AG04450 (cell line): ENCODE measurements at regions of chr2 and their contacts with region 1.

Region 1: GRCh38 chr2:127649684-127650040 is 3.7 kb downstream of the GPR17 start:
- DNase-seq: peak; percentile 61
- H3K4me3 ChIP-seq: no peak overlapping the region
- H3K27ac ChIP-seq: no peak overlapping the region
- H3K27me3 ChIP-seq: no peaks in the 10 kb centered on the region
- CTCF ChIP-seq: peak; percentile 91

Region 2: DNA sequence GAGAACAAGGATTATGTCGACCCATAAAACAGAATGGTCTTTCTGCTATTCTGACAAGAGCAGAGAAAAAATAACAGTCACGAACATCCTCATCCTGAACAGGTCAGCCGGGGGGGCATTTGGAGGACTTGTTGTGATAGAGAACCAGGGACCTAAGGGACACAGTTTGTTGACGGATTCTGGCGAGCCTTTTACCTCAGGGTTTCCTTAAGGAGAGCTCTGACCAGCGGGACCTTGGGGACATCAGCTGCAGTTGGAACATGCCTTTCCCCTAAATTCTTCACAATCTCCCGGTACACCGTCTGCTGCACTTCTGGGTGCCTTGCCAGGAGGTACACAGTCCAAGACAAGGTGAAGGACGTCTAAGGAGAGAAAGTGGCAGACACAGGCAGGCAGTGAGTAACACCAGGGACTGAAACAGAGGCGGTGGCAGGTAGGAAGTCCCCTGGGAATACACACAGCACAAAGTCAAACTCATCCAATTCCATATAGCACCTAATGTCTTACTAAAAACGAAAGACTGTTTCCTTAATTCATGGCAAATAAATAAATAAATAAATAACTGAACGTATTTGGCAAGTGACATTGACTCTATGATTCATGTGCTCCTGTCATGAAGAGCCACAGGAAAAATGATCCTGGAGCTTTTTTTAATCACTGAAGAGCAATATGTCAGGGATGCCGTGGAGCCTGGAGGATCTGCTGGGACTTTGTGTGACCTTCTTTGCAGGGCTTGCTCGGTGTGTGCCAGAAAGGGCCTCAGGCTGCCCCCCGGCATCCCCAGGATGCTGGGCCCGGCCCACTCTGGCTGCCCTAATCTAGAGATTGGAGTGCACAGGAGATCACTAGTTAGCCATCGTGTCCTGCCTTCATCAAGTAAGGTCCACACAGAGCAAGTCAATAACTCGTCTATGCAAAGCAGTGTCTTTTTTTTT is 454.3 kb before region 1 on chr2:
- CTCF ChIA-PET with region 1: interaction called, 11 read pairs
- POLR2A ChIA-PET with region 1: no interaction called
- DNase-seq: no peak
- H3K4me3 ChIP-seq: no peak overlapping the region
- H3K27ac ChIP-seq: no peak overlapping the region
- H3K27me3 ChIP-seq: peaks cover 4% of the 10 kb centered on the region
- CTCF ChIP-seq: no peak

Region 3: GRCh38 chr2:127591221-127591923 is 58.3 kb before region 1 on chr2:
- CTCF ChIA-PET with region 1: interaction called, 22 read pairs
- POLR2A ChIA-PET with region 1: no interaction called
- DNase-seq: peak; percentile 16
- H3K4me3 ChIP-seq: no peak overlapping the region
- H3K27ac ChIP-seq: no peak overlapping the region
- H3K27me3 ChIP-seq: peaks cover 5% of the 10 kb centered on the region
- CTCF ChIP-seq: peak; percentile 97